ENCODE measurements at regions of chr10 and their contacts with region 1.

Region 1: DNA sequence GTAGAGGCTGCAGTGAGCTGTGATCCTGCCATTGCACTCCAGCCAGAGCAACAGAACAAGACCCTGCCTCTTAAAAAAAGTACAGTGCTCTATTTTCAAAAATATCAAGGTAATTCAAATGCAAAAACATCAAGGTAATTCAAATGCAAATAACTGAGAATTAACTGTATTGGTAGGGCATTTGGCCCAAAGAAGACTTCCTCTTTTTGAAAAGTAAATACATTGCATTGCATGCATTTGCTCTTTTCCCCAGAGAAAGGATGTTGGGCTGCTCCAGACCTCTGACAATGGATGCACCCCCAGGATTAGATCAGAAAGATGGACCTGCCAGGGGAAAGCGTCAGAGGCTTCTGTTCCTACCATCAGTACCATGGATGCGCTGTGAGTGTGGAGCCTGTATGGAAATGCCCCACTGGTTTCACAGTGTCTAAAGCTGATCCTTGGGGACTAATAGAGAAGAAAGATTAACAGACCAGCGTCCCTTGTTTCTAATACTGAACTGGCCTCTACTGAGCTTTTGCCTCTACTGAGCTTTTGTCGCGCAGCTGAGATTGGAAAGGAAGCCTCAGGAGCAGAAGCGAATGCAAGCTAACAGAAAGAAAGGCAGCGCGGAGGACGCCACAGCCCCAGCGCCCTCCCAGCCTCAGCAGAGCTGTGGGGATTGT is 93.5 kb upstream of the LYZL2 start:
- DNase-seq: no peak
- ATAC-seq: no peak
- H3K4me3 ChIP-seq: no peak overlapping the region
- H3K27ac ChIP-seq: no peak overlapping the region
- H3K4me1 ChIP-seq: no peaks in the 10 kb centered on the region
- H3K27me3 ChIP-seq: peaks cover 6 to 41% of the 10 kb centered on the region in 2 experiments
- CTCF ChIP-seq: no peak
- EP300 ChIP-seq: no peak
- POLR2A ChIP-seq: no peak
- RAD21 ChIP-seq: no peak

Region 2: DNA sequence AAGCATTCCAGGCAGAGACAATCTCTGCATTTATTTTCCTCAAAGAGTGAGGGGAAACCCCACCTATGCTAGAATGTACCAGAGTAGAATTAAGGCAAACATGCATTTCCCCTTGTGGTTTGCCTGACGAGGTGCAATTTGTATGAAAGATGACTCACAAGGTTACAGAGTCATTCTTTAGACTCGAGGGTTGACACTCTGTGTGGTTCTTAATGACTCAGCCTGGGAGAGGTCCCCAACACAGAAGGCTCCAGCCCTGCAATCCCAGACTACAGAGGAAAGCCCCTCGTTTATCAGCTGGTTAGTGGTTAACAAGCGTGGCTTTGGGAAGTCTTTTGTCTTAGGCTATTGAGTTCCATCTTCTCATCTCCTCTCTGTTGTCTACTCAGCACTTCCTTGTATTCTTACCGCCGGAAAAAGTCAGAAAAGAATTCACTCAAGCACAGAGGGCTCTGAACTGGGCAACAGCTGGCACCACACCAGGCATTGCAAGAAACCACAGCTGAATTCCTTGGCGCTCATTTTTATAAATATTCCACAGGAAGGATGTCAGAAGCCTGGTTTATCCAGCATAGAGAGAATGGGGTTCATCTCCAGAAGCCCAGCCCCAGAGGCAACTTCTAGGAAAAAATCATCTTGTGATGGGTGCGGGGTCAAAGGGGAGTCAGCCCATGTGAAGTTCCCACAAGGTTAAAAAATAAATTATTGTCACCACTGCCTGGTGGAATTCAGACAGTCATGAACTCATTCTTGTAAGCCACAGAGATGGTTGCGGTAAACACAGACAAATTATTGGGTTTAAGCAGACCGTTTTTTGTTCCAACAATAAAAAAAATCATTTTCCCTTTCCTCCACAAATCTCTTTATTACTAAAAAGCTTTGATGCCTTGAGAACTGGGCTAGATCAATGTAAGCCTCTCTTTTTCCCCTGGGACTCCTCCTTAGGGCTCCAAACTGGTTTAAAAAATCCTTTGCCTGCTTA is 1063.8 kb before region 1 on chr10:
- CTCF ChIA-PET with region 1: no interaction called
- POLR2A ChIA-PET with region 1: no interaction called
- in situ Hi-C with region 1: no loop called
- intact Hi-C with region 1: no loop called
- DNase-seq: peak in 2 of 4 experiments; percentile 9 to 13
- ATAC-seq: no peak
- H3K4me3 ChIP-seq: no peak overlapping the region
- H3K27ac ChIP-seq: no peak overlapping the region
- H3K4me1 ChIP-seq: no peaks in the 10 kb centered on the region
- H3K27me3 ChIP-seq: no peaks in the 10 kb centered on the region
- CTCF ChIP-seq: no peak
- EP300 ChIP-seq: no peak
- POLR2A ChIP-seq: no peak
- RAD21 ChIP-seq: no peak

Region 3: GRCh38 chr10:30683496-30683895 is 39.6 kb before region 1 on chr10:
- CTCF ChIA-PET with region 1: no interaction called
- POLR2A ChIA-PET with region 1: no interaction called
- in situ Hi-C with region 1: no loop called
- intact Hi-C with region 1: no loop called
- DNase-seq: no peak
- ATAC-seq: no peak
- H3K4me3 ChIP-seq: no peak overlapping the region
- H3K27ac ChIP-seq: no peak overlapping the region
- H3K4me1 ChIP-seq: peaks cover 0 to 7% of the 10 kb centered on the region in 2 experiments; a peak in 2 of 5 replicates
- H3K27me3 ChIP-seq: peaks cover 5 to 11% of the 10 kb centered on the region in 2 experiments; a peak in 4 of 5 replicates
- CTCF ChIP-seq: no peak
- EP300 ChIP-seq: no peak
- POLR2A ChIP-seq: no peak
- RAD21 ChIP-seq: no peak

Region 4: DNA sequence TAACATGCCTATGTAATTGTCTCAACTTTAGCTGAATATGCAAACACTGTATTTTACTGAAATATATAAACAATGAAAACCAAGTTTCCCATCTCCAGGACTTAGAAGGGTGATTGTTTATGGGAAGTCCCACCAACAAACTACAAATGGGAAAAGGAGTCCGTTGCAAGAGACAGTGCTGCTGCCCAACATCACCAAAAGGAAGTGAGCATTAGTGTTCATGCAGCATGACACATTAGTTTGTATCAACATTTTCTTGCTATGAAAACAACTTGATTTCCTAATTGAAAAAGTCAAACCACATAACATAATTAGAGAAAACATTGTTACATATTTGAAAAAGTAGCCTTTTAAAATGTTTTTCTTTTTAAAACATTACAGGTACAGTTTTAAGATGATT is 170.1 kb after region 1 on chr10:
- CTCF ChIA-PET with region 1: no interaction called
- POLR2A ChIA-PET with region 1: no interaction called
- in situ Hi-C with region 1: no loop called
- intact Hi-C with region 1: no loop called
- DNase-seq: no peak
- ATAC-seq: no peak
- H3K4me3 ChIP-seq: no peak overlapping the region
- H3K27ac ChIP-seq: no peak overlapping the region
- H3K4me1 ChIP-seq: no peaks in the 10 kb centered on the region
- H3K27me3 ChIP-seq: no peaks in the 10 kb centered on the region
- CTCF ChIP-seq: no peak
- EP300 ChIP-seq: no peak
- POLR2A ChIP-seq: no peak
- RAD21 ChIP-seq: no peak

Region 5: DNA sequence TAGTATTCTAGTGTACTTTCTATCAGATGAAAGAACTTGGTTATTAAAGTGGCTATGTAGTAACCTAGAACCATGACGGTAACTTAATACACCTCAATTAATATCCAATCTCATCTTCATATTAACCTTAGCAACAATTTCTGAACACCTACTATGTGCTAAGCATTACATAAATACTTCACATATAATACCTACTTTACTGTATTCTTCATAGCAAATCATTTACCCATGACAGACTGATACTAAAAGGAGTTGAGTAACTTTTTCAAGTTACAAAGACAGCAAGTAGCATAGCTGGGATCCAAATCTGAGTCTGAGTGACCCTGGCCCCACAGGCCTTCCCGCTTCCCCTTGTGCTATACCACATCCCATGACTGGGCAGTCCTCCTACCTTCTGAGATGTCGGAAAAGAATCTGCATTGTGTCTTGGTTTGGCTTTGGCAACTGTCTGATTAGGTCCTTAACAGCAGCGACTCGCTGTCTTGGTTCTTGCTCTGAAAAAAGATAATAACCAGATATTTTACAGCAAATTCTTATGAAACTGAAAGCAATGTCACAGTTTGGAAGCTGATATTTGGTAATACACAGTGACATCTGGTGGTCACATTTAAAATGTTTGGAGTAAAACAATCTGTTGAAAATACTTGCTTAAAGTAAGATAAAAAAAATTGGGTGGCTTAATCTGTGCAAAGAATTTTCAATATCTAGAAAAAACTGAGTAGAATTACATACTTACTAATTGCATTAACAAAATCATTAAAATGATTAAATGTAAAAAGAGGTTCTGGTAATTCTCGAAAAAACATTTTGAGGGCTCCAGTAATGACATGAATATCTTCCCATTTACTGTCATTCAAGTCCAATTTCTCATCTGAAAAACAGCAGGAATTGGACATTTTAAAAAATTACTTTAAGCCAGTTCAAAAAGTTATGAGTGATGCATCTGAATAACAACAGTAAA is 1085.5 kb after region 1 on chr10:
- CTCF ChIA-PET with region 1: interaction called, 8 read pairs
- POLR2A ChIA-PET with region 1: no interaction called
- in situ Hi-C with region 1: no loop called
- intact Hi-C with region 1: loop called (anchors 10 kb)
- DNase-seq: peak; percentile 5 to 56 (median 10)
- ATAC-seq: peak; percentile 85
- H3K4me3 ChIP-seq: no peak overlapping the region
- H3K27ac ChIP-seq: no peak overlapping the region; the same call in 2 of the 3 replicates
- H3K4me1 ChIP-seq: no peaks in the 10 kb centered on the region
- H3K27me3 ChIP-seq: no peaks in the 10 kb centered on the region
- CTCF ChIP-seq: peak; percentile 32 to 54 (median 43); a peak in 4 of 6 replicates
- EP300 ChIP-seq: no peak
- POLR2A ChIP-seq: no peak
- RAD21 ChIP-seq: peak; percentile 69 to 75